MCF 10A (cell line): ENCODE measurements at regions of chr9 and their contacts with region 1.

Region 1: GRCh38 chr9:133023117-133023890 is 7.5 kb upstream of the GTF3C5 start:
- DNase-seq: no peak
- H3K4me3 Mint-ChIP-seq: no peak overlapping the region
- H3K27ac Mint-ChIP-seq: no peak overlapping the region
- H3K4me1 Mint-ChIP-seq: no peaks in the 10 kb centered on the region
- H3K27me3 Mint-ChIP-seq: no peaks in the 10 kb centered on the region
- CTCF ChIP-seq: no peak

Region 2: GRCh38 chr9:132293145-132293721 is 730.1 kb before region 1 on chr9:
- CTCF ChIA-PET with region 1: no interaction called
- POLR2A ChIA-PET with region 1: no interaction called
- intact Hi-C with region 1: no loop called
- DNase-seq: no peak
- H3K4me3 Mint-ChIP-seq: no peak overlapping the region
- H3K27ac Mint-ChIP-seq: no peak overlapping the region
- H3K4me1 Mint-ChIP-seq: no peaks in the 10 kb centered on the region
- H3K27me3 Mint-ChIP-seq: no peaks in the 10 kb centered on the region
- CTCF ChIP-seq: no peak

Region 3: DNA sequence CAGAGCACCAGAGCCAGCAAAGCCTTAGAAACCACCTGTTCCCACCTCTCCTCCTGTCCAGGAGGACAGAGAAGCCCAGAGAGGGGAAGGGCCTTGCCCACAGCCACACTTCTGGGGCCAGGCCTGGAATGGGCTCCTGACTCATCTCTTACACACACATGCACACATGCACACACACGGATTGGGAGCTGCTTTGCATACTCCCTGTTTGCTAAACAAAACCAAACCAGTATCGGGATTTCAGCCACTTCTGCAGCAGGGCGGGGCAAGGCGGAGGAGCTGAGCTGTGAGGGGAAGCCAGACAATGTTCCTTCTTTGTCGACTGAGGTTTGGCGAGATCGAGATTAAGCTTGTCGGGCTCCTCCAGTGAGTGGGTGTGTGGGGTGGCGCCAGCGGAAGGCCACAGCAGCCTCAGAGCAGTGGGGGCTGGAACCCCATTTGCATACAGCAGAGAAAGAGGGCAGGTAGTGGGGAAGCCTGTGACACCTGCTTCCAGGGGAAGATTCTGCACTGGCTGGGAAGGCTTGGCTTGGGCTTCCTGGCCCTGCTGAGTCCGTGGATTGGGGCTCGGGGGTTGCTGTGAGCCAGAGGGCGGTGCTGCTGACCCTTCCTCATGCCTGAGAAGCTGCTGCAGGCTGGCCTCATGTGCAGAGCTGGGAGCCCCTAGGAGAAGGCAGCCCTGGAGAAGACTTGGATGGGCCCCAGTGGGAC is 28.7 kb before region 1 on chr9:
- CTCF ChIA-PET with region 1: interaction called, 10 read pairs
- POLR2A ChIA-PET with region 1: interaction called, 3 read pairs
- intact Hi-C with region 1: no loop called
- DNase-seq: peak; percentile 63
- H3K4me3 Mint-ChIP-seq: no peak overlapping the region
- H3K27ac Mint-ChIP-seq: peak overlapping the region; percentile 1
- H3K4me1 Mint-ChIP-seq: peaks cover 6% of the 10 kb centered on the region
- H3K27me3 Mint-ChIP-seq: peaks cover 21% of the 10 kb centered on the region
- CTCF ChIP-seq: no peak

Region 4: GRCh38 chr9:133004091-133004998 is 19.0 kb before region 1 on chr9:
- CTCF ChIA-PET with region 1: interaction called, 37 read pairs
- POLR2A ChIA-PET with region 1: interaction called, 4 read pairs
- intact Hi-C with region 1: no loop called
- DNase-seq: no peak
- H3K4me3 Mint-ChIP-seq: no peak overlapping the region
- H3K27ac Mint-ChIP-seq: no peak overlapping the region
- H3K4me1 Mint-ChIP-seq: peaks cover 9% of the 10 kb centered on the region
- H3K27me3 Mint-ChIP-seq: peaks cover 30% of the 10 kb centered on the region
- CTCF ChIP-seq: no peak

Region 5: GRCh38 chr9:133485361-133486260 is 462.3 kb after region 1 on chr9:
- CTCF ChIA-PET with region 1: no interaction called
- POLR2A ChIA-PET with region 1: no interaction called
- intact Hi-C with region 1: loop called (anchors 1 kb)
- DNase-seq: no peak
- H3K4me3 Mint-ChIP-seq: no peak overlapping the region
- H3K27ac Mint-ChIP-seq: no peak overlapping the region
- H3K4me1 Mint-ChIP-seq: no peaks in the 10 kb centered on the region
- H3K27me3 Mint-ChIP-seq: peaks cover 10% of the 10 kb centered on the region
- CTCF ChIP-seq: no peak